ENCODE measurements at regions of chr19 and their contacts with region 1.

Region 1: GRCh38 chr19:10644260-10645007 is 9.7 kb upstream of the ILF3 start:
- DNase-seq: peak; percentile 86 to 91
- ATAC-seq: peak; percentile 93 to 97 (median 94)
- H3K4me3 ChIP-seq: no peak overlapping the region
- H3K4me3 Mint-ChIP-seq: no peak overlapping the region
- H3K27ac ChIP-seq: peak overlapping the region; percentile 29
- H3K27ac Mint-ChIP-seq: peak overlapping the region; percentile 72 to 85
- H3K4me1 ChIP-seq: peaks cover 39% of the 10 kb centered on the region
- H3K4me1 Mint-ChIP-seq: peaks cover 4 to 32% of the 10 kb centered on the region in 2 donors
- H3K27me3 ChIP-seq: no peaks in the 10 kb centered on the region
- H3K27me3 Mint-ChIP-seq: no peaks in the 10 kb centered on the region
- CTCF ChIP-seq: peak; percentile 82

Region 2: GRCh38 chr19:10580979-10581631 is 63.3 kb before region 1 on chr19:
- intact Hi-C with region 1: loop called (anchors 1 kb)
- DNase-seq: peak; percentile 88 to 95
- ATAC-seq: peak; percentile 96 to 100 (median 99)
- H3K4me3 ChIP-seq: no peak overlapping the region
- H3K4me3 Mint-ChIP-seq: peak overlapping the region; percentile 4
- H3K27ac ChIP-seq: no peak overlapping the region
- H3K27ac Mint-ChIP-seq: no peak overlapping the region
- H3K4me1 ChIP-seq: peaks cover 27% of the 10 kb centered on the region
- H3K4me1 Mint-ChIP-seq: peaks cover 12 to 21% of the 10 kb centered on the region in 2 donors
- H3K27me3 ChIP-seq: no peaks in the 10 kb centered on the region
- H3K27me3 Mint-ChIP-seq: no peaks in the 10 kb centered on the region
- CTCF ChIP-seq: peak; percentile 97

Region 3: GRCh38 chr19:10797541-10798256 is 153.3 kb after region 1 on chr19:
- intact Hi-C with region 1: no loop called
- DNase-seq: peak; percentile 94 to 96
- ATAC-seq: peak; percentile 77 to 91 (median 78)
- H3K4me3 ChIP-seq: peak overlapping the region; percentile 20
- H3K4me3 Mint-ChIP-seq: peak overlapping the region; percentile 96
- H3K27ac ChIP-seq: peak overlapping the region; percentile 98
- H3K27ac Mint-ChIP-seq: peak overlapping the region; percentile 93 to 100
- H3K4me1 ChIP-seq: peaks cover 69% of the 10 kb centered on the region
- H3K4me1 Mint-ChIP-seq: peaks cover 47 to 54% of the 10 kb centered on the region in 2 donors
- H3K27me3 ChIP-seq: no peaks in the 10 kb centered on the region
- H3K27me3 Mint-ChIP-seq: no peaks in the 10 kb centered on the region
- CTCF ChIP-seq: no peak

Region 4: DNA sequence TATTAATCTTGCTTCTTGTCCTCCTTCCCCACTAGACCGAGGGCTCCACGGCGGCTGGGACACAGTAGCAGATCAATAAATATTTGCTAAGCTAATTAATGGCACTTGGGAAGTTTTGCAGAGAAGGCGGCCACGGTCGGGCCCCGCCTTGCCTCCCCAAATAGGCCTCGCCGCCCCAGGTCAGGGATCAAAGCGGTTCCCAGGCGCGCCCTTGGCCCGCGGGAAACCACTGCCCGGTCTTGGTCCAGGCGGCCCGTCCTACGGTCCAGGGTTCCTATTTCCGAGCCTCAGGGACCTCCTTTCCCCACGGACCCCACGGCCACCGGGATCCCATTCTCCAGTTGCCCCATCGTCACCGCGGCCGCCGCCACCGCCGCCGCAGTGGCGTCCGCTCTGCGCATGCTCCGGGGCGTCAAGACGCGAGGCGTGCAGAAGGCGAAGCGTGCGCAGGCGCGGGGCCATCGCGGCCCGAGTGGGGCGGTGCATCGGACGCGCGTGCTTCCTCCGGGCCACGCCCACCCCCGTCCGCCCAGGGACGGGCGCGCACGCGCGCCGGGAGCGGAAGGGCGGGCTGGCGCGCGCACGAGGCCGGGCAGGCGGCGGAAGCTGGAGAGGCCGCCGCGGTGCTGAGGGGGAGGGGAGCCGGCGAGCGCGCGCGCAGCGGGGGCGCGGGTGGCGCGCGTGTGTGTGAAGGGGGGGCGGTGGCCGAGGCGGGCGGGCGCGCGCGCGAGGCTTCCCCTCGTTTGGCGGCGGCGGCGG is 316.1 kb after region 1 on chr19 and contains the start of gene SMARCA4:
- intact Hi-C with region 1: no loop called
- DNase-seq: peak; percentile 99 to 100
- ATAC-seq: peak; percentile 88 to 97 (median 89)
- H3K4me3 ChIP-seq: peak within 1 kb of the TSS; percentile 76
- H3K4me3 Mint-ChIP-seq: peak within 1 kb of the TSS; percentile 93
- H3K27ac ChIP-seq: peak within 1 kb of the TSS; percentile 87
- H3K27ac Mint-ChIP-seq: peak within 1 kb of the TSS; percentile 90 to 95
- H3K4me1 ChIP-seq: peaks cover 41% of the 10 kb centered on the region
- H3K4me1 Mint-ChIP-seq: peaks cover 37% of the 10 kb centered on the region in 2 donors
- H3K27me3 ChIP-seq: no peaks in the 10 kb centered on the region
- H3K27me3 Mint-ChIP-seq: no peaks in the 10 kb centered on the region
- CTCF ChIP-seq: no peak
- total RNA-seq, gene SMARCA4: 85.4 to 96.1 (median 93.6) TPM

Measured in natural killer cell (primary cell).